Stomach (tissue), 19 donors: ENCODE measurements at regions of chr17 and their contacts with region 1.

Region 1: DNA sequence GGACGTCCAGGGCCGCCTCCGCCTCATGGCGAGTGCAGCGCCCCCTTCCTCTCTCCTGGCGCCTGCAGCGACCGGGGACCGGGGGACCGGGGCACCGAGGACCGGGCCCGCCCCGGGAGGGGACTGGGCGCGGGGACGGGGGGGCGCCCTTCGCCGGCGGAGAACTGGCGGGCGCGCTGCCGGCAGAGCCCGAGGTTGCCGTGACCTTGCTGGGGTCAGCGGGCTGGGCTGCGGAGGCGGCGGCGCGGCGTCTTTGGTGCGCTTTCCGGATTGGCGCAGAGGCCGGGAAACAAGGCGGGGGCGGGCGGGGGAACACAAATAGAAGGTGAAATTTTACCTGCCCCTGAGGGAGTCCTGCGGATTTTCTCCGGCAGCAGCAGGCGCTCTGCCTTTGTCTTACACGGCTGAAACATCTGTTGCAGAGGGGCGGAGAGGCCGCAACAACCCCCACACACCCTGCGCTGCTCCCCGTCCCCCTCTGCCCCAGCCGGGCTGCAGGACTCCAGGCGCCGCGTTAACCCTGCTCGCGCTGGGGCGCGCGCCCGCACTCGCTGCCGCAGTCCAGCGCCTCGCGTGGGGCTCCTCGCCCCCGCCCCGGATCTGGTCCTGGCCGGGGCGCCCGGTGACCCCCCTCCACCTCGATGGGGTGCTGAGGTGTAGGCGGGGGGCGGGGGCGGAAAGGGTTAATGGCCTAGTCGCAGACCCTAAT is 53.5 kb downstream of the SREBF1 start:
- DNase-seq: peak; percentile 87 to 88
- H3K4me3 ChIP-seq: peak overlapping the region; percentile 45 to 69 (median 58)
- H3K27ac ChIP-seq: peak overlapping the region; percentile 80 to 91 (median 88)
- H3K4me1 ChIP-seq: peaks cover 75 to 89% (median 87%) of the 10 kb centered on the region in 4 donors
- H3K27me3 ChIP-seq: peaks cover 0 to 23% (median 8%) of the 10 kb centered on the region in 3 donors
- CTCF ChIP-seq: peak in 1 of 7 experiments; percentile 4
- EP300 ChIP-seq: no peak
- POLR2A ChIP-seq: no peak

Region 2: GRCh38 chr17:17670701-17671305 is 112.5 kb before region 1 on chr17:
- intact Hi-C with region 1: no loop called
- DNase-seq: no peak
- H3K4me3 ChIP-seq: no peak overlapping the region
- H3K27ac ChIP-seq: no peak overlapping the region
- H3K4me1 ChIP-seq: peaks cover 0 to 7% (median 2%) of the 10 kb centered on the region in 4 donors
- H3K27me3 ChIP-seq: peaks cover 0 to 9% (median 0%) of the 10 kb centered on the region in 3 donors
- CTCF ChIP-seq: no peak
- EP300 ChIP-seq: no peak
- POLR2A ChIP-seq: no peak

Region 3: GRCh38 chr17:17681187-17681848 is 102.0 kb before region 1 on chr17 and contains the start of gene RAI1:
- intact Hi-C with region 1: loop called (anchors 10 kb)
- DNase-seq: peak; percentile 81 to 95
- H3K4me3 ChIP-seq: peak within 1 kb of the TSS; percentile 75 to 81 (median 80)
- H3K27ac ChIP-seq: peak within 1 kb of the TSS; percentile 94 to 97 (median 95)
- H3K4me1 ChIP-seq: peaks cover 32 to 40% (median 39%) of the 10 kb centered on the region in 4 donors
- H3K27me3 ChIP-seq: no peaks in the 10 kb centered on the region
- CTCF ChIP-seq: peak in 3 of 7 experiments; percentile 64 to 97 (median 81)
- EP300 ChIP-seq: no peak
- POLR2A ChIP-seq: no peak
- total RNA-seq, gene RAI1: 19.1 to 94.5 (median 46.9) TPM